ENCODE measurements at regions of chr6 and their contacts with region 1.

Region 1: GRCh38 chr6:112163295-112164257 is 76.2 kb downstream of the FAM229B start:
- DNase-seq: peak; percentile 83
- H3K4me3 ChIP-seq: no peak overlapping the region; a peak in 1 of 4 replicates
- H3K27ac ChIP-seq: no peak overlapping the region
- H3K4me1 ChIP-seq: no peaks in the 10 kb centered on the region
- H3K27me3 ChIP-seq: no peaks in the 10 kb centered on the region
- CTCF ChIP-seq: peak; percentile 96
- EP300 ChIP-seq: no peak
- RAD21 ChIP-seq: peak; percentile 98

Region 2: DNA sequence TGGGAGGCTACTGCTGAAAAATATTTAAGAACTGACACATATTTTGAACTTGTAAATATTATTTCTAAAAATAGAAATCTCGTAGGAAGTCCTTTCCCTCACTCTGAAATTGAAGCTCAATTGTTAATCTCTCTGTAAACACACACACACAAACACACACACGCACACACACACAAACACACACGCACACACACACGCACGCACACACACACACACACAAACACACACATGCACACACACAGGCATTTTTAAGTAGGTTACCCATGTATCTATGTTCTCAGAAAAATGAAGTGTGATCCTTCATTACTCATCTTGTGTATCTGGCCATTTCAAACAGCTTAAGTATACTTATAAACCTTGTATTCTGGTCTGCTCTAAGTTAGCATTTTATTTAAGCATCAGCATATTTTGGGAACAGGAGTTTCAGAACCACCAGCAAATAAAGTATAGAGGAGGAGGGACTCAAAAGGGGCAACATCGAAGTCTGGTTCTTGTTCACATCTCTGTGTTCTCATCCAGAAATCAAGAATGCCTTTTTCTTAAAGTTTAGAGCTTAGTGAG is 98.1 kb before region 1 on chr6:
- CTCF ChIA-PET with region 1: interaction called, 11 read pairs
- POLR2A ChIA-PET with region 1: no interaction called
- DNase-seq: no peak
- H3K4me3 ChIP-seq: no peak overlapping the region
- H3K27ac ChIP-seq: no peak overlapping the region
- H3K4me1 ChIP-seq: no peaks in the 10 kb centered on the region
- H3K27me3 ChIP-seq: no peaks in the 10 kb centered on the region
- CTCF ChIP-seq: no peak
- EP300 ChIP-seq: no peak
- RAD21 ChIP-seq: no peak

Region 3: GRCh38 chr6:112087136-112087911 is 76.3 kb before region 1 on chr6 and contains the starts of genes FAM229B and TUBE1:
- CTCF ChIA-PET with region 1: interaction called, 42 read pairs
- POLR2A ChIA-PET with region 1: interaction called, 3 read pairs
- DNase-seq: peak; percentile 83
- H3K4me3 ChIP-seq: peak within 1 kb of the TSS; percentile 91 to 93
- H3K27ac ChIP-seq: peak within 1 kb of the TSS; percentile 77 to 88
- H3K4me1 ChIP-seq: peaks cover 2 to 5% of the 10 kb centered on the region in 2 experiments; a peak in 3 of 4 replicates
- H3K27me3 ChIP-seq: no peaks in the 10 kb centered on the region
- CTCF ChIP-seq: no peak
- EP300 ChIP-seq: no peak; a peak in 1 of 4 replicates
- RAD21 ChIP-seq: no peak
- polyA plus RNA-seq, gene FAM229B: 15.9 and 20.6 TPM in 2 replicates
- polyA plus RNA-seq, gene TUBE1: 11.9 and 14.6 TPM in 2 replicates

Region 4: DNA sequence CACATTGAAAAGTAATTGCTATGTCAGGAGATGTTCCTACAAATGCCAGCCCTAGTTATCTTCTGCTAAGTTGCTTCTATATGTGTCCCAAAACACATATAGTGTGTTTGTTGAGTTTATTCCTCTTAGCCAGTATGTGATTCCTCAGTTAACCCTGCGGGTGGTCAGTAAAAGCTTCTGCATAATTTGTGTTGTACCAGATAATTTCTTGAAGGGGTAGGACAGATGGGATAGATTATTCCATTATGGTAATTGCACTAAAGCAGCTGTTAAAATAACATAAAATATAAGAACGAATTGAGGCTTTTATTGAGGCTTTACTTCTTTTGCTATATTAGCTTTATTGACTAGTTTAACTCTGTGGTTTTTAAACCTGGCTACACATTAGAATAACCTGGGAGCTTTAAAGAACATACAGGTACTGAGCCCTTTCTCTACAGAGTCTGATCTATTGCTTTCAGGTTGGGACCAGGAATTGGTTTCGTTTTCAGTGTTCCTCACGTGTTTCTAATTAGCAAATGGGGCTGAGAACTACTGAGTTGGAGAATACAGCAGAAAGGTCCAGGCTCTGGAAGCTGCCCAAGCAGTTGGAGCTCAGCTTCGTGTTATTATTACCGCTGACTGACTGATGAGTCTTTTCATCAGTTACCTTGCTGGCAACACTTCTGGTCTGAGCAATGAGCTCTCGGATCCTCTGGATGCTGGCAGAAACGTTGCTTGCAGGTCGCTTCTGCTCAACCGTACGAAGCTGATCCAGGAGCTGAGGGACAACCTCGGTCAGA is 19.2 kb before region 1 on chr6:
- CTCF ChIA-PET with region 1: interaction called, 15 read pairs
- POLR2A ChIA-PET with region 1: interaction called, 3 read pairs
- DNase-seq: peak; percentile 40
- H3K4me3 ChIP-seq: peak overlapping the region in 1 of 2 experiments; percentile 1; a peak in 1 of 4 replicates
- H3K27ac ChIP-seq: peak overlapping the region; percentile 19 to 96; a peak in 3 of 4 replicates
- H3K4me1 ChIP-seq: peaks cover 0 to 20% of the 10 kb centered on the region in 2 experiments; a peak in 3 of 4 replicates
- H3K27me3 ChIP-seq: no peaks in the 10 kb centered on the region
- CTCF ChIP-seq: no peak
- EP300 ChIP-seq: 0 out of 4 replicates have a peak, but pooled peaks of 1 of the 2 experiments have one; percentile 2
- RAD21 ChIP-seq: no peak

Region 5: DNA sequence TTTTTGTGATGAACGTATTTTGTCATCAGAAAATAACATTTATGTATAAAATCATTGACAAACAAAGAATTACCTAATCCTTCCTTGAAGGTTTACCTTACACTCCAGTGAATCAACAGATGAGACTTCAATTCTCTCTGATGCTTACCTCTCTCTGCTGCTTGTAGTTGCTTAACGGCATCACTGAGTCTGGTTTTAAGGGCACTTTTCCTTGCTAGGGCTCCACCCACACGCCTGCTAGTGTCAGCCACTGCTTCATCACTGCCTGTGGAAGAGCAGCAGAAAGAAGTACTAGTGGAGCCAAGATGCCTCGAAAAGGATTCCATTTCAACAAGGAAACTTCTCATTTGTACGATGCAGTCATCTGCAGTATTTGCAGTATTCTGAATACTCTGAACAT is 13.2 kb before region 1 on chr6:
- CTCF ChIA-PET with region 1: interaction called, 14 read pairs
- POLR2A ChIA-PET with region 1: no interaction called
- DNase-seq: no peak
- H3K4me3 ChIP-seq: no peak overlapping the region
- H3K27ac ChIP-seq: peak overlapping the region; percentile 69 to 91; a peak in 3 of 4 replicates
- H3K4me1 ChIP-seq: peaks cover 11 to 20% of the 10 kb centered on the region in 2 experiments; a peak in 3 of 4 replicates
- H3K27me3 ChIP-seq: no peaks in the 10 kb centered on the region
- CTCF ChIP-seq: no peak
- EP300 ChIP-seq: no peak
- RAD21 ChIP-seq: no peak